GM12878 (cell line): ENCODE measurements at regions of chr2 and their contacts with region 1.

Region 1: DNA sequence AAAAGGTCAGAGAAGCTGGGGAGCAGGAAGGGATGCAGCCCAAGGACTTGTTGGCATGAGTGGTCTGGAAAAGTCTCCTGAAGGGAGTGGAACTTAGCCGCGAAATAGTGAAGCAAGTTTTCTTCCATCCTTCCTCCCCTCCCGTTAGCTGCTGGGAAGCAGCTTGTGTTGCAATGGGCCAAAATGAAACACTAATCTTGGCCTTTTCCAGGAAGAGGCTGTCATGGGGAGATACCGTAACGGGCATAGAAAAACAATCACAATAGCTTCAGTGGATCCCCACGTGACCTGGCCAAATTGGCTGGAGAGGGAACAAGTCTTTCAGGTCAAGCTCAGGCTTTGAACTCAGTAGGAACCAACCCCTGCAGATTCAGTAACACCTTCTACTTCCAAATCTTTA is 49.3 kb downstream of the SEMA4F start:
- DNase-seq: no peak
- ATAC-seq: no peak
- H3K4me3 ChIP-seq: no peak overlapping the region
- H3K27ac ChIP-seq: no peak overlapping the region
- H3K4me1 ChIP-seq: peaks cover 9% of the 10 kb centered on the region
- H3K27me3 ChIP-seq: no peaks in the 10 kb centered on the region
- CTCF ChIP-seq: no peak
- EP300 ChIP-seq: no peak
- POLR2A ChIP-seq: no peak
- RAD21 ChIP-seq: no peak

Region 2: DNA sequence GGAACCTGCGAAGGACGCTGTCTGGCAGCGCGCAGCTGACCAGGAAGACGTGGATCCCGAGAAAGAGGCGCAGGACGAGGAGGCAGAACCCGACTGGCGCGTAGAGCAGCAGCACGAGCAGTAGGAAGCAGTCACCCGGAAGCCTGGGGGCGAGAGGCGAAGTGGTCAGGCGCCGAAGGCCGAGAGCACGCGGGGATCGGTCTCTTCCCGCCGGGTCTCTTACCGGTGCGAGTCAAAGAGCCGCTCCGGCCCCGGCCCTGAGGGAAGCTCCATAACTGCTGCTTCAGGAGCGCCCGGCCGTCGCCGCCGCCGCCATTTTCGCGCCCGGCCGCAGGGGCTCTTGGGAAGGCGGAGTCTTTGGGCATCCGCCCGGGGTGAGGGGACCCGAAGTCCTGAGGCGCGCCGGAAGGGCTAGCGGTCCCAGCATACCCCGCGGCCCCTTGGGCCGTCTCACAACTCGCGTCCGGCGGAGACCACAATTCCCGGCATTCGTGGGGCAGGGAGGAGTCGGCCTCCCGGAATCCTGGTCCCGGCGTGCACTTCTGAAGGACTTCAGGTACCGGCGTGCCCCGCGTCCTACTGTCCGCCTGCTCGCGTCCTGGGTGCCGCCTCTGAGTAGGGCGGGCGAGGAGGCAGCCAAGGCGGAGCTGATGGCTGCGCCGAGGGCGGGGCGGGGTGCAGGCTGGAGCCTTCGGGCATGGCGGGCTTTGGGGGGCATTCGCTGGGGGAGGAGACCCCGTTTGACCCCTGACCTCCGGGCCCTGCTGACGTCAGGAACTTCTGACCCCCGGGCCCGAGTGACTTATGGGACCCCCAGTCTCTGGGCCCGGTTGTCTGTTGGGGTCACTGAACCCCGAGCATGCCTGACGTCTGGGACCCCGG is 173.8 kb before region 1 on chr2 and contains the starts of genes AUP1 and HTRA2:
- CTCF ChIA-PET with region 1: no interaction called
- POLR2A ChIA-PET with region 1: no interaction called
- RAD21 ChIA-PET with region 1: no interaction called
- SMC1A ChIA-PET with region 1: no interaction called
- in situ Hi-C with region 1: no loop called
- intact Hi-C with region 1: no loop called
- DNase-seq: peak; percentile 96
- ATAC-seq: peak; percentile 90
- H3K4me3 ChIP-seq: peak within 1 kb of the TSS; percentile 94
- H3K27ac ChIP-seq: peak within 1 kb of the TSS; percentile 96
- H3K4me1 ChIP-seq: peaks cover 33% of the 10 kb centered on the region
- H3K27me3 ChIP-seq: no peaks in the 10 kb centered on the region
- CTCF ChIP-seq: no peak
- EP300 ChIP-seq: no peak
- POLR2A ChIP-seq: peak; percentile 84
- RAD21 ChIP-seq: no peak
- polyA plus RNA-seq, gene AUP1: 39.1 to 56.5 TPM
- polyA plus RNA-seq, gene HTRA2: 42.3 to 46.4 TPM

Region 3: DNA sequence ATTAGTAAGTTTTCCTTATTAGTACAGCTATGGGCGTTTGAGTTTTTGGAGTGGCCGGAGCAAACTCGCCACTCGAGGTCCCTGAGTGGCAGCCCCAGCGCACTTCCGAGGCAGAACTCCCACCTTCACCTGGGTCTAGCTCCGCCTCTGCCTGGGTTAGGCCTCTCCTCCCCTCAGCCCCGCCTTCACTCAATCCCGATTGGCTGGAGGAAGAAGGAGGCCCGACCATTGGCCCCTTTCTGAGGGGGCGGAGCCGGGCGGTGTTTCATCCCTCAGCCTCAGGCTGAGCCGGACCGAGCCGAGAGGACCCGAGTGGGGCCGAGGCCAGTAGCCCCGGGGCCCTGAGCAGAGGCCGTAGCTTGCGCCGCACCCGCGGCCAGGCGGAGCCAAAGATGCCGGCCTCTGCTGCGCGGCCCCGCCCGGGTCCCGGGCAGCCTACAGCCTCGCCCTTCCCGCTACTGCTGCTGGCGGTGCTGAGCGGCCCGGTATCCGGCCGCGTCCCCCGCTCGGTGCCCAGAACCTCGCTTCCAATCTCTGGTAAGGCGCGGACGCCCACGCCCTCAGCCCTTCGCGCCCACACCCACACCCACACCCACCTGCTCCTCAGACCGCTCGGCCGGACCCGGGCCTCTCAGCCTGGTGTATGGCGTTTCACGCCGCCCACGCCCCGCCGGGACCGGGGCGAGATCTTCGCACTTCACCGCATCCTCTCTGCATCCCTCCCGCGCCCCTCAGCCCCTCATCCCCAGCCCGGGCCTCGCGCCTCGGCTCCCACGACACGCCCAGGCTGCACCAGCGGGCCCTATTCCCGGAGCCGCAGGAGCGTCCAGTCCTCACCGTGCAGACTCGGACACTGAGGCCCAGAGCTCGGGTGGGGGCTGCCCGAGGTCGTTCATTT is 49.1 kb before region 1 on chr2 and contains the start of gene SEMA4F:
- CTCF ChIA-PET with region 1: no interaction called
- POLR2A ChIA-PET with region 1: no interaction called
- RAD21 ChIA-PET with region 1: no interaction called
- SMC1A ChIA-PET with region 1: no interaction called
- in situ Hi-C with region 1: no loop called
- intact Hi-C with region 1: no loop called
- DNase-seq: peak; percentile 90
- ATAC-seq: peak; percentile 99
- H3K4me3 ChIP-seq: peak within 1 kb of the TSS; percentile 78
- H3K27ac ChIP-seq: peak within 1 kb of the TSS; percentile 15; the same call in 1 of the 2 replicates
- H3K4me1 ChIP-seq: peaks cover 8% of the 10 kb centered on the region
- H3K27me3 ChIP-seq: no peaks in the 10 kb centered on the region
- CTCF ChIP-seq: no peak
- EP300 ChIP-seq: no peak
- POLR2A ChIP-seq: peak; percentile 62; the same call in 1 of the 2 replicates
- RAD21 ChIP-seq: no peak
- polyA plus RNA-seq, gene SEMA4F: 0.26 to 0.53 TPM

Region 4: DNA sequence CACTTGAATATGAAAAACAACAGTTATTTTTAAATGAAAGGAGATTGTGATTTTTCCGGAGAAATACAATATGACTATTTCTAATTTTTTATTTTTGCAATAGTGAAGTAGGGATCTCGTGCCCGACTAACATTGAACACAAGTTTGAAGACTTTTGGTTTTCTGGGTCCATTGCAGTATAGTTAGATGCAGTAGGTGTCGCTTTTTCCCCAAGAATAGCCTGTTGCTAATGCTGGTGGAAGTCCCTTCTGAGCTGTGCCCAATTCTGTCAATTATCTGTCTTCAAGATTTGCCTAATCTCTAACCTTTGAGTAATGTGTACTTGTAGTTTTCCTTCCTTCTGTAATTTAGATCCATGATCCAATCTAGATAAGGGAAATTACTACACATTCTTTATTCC is 12.8 kb before region 1 on chr2:
- CTCF ChIA-PET with region 1: interaction called, 20 read pairs
- POLR2A ChIA-PET with region 1: no interaction called
- RAD21 ChIA-PET with region 1: no interaction called
- SMC1A ChIA-PET with region 1: interaction called, 11 read pairs
- in situ Hi-C with region 1: no loop called
- intact Hi-C with region 1: no loop called
- DNase-seq: peak; percentile 28
- ATAC-seq: peak; percentile 95
- H3K4me3 ChIP-seq: no peak overlapping the region
- H3K27ac ChIP-seq: no peak overlapping the region
- H3K4me1 ChIP-seq: no peaks in the 10 kb centered on the region
- H3K27me3 ChIP-seq: peaks cover 0 to 2% of the 10 kb centered on the region in 2 experiments; a peak in 1 of 4 replicates
- CTCF ChIP-seq: peak; percentile 71 to 92 (median 72)
- EP300 ChIP-seq: no peak
- POLR2A ChIP-seq: no peak
- RAD21 ChIP-seq: peak; percentile 94

Region 5: GRCh38 chr2:74982577-74982976 is 279.2 kb after region 1 on chr2:
- CTCF ChIA-PET with region 1: no interaction called
- POLR2A ChIA-PET with region 1: no interaction called
- RAD21 ChIA-PET with region 1: no interaction called
- SMC1A ChIA-PET with region 1: no interaction called
- in situ Hi-C with region 1: no loop called
- intact Hi-C with region 1: no loop called
- DNase-seq: no peak
- ATAC-seq: peak; percentile 50; the same call in 2 of the 3 replicates
- H3K4me3 ChIP-seq: no peak overlapping the region
- H3K27ac ChIP-seq: no peak overlapping the region
- H3K4me1 ChIP-seq: no peaks in the 10 kb centered on the region
- H3K27me3 ChIP-seq: no peaks in the 10 kb centered on the region
- CTCF ChIP-seq: peak in 2 of 3 experiments; percentile 29 to 40; a peak in 3 of 6 replicates
- EP300 ChIP-seq: no peak
- POLR2A ChIP-seq: no peak
- RAD21 ChIP-seq: peak; percentile 37